Caco-2 (cell line): ENCODE measurements at regions of chr2 and their contacts with region 1.

Region 1: DNA sequence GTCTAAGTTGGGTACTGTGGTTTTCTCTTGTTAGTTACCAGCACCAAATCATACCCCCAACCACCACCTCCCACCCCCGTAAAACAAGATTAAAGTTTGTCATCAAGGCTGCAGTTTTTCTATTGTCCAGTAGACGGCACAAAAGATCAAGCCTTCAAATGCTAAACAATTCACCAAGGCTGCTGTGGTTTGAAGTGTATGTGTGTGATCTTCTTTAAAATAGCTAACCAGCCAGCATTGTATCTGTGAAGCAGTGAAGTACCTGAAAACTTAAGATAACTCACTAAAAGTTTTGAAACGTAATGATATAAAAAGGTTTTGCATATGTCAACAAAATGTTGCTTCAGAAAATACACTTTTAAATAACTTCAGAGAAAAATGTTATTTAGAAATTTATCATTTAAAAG is 5.9 kb upstream of the MEIS1 start:
- DNase-seq: peak in 1 of 2 experiments; percentile 56
- H3K4me3 ChIP-seq: no peak overlapping the region
- H3K4me3 Mint-ChIP-seq: no peak overlapping the region
- H3K27ac Mint-ChIP-seq: no peak overlapping the region
- H3K4me1 ChIP-seq: peaks cover 25% of the 10 kb centered on the region
- H3K4me1 Mint-ChIP-seq: peaks cover 16% of the 10 kb centered on the region
- H3K27me3 ChIP-seq: no peaks in the 10 kb centered on the region
- H3K27me3 Mint-ChIP-seq: no peaks in the 10 kb centered on the region
- CTCF ChIP-seq: peak; percentile 86 to 92

Region 2: DNA sequence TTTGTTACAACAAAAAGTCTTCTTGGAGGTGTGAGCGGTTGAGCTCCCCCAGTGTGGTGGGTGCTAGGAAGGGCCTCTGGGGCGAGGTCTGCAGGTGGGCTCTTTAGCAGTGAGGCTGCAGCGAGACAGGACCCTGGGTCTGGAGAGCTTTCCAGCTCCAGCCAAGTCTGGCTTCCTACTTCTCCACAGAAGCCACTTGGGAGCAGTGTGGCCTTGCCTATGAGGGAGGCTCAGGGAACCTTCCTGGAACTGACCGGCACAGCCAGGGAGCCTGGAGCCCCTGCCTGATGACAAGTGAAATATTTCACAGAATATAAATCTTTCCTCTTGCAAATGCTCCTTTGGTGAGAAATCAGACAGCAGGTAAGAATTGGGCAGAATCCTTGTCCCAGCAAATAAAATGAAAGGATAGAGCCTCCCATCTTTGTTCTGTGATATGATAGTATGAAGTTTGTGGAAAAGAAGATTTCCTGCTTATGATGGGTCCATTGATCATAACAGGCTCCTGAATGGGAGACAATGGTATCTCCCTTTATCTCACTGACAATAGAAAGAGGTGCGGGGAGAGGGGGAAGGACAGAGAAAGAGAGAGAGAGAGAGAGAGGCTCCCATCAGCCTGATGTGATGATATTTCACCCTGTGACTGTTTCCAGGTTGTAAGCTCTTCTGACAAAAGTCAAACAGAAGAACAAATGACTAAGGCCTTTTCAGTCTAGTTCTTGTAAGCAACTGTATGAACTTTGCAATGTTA is 706.9 kb before region 1 on chr2:
- CTCF ChIA-PET with region 1: no interaction called
- POLR2A ChIA-PET with region 1: no interaction called
- intact Hi-C with region 1: loop called (anchors 5 kb)
- DNase-seq: peak; percentile 22 to 50
- H3K4me3 ChIP-seq: no peak overlapping the region
- H3K4me3 Mint-ChIP-seq: no peak overlapping the region
- H3K27ac Mint-ChIP-seq: no peak overlapping the region
- H3K4me1 ChIP-seq: no peaks in the 10 kb centered on the region
- H3K4me1 Mint-ChIP-seq: no peaks in the 10 kb centered on the region
- H3K27me3 ChIP-seq: no peaks in the 10 kb centered on the region
- H3K27me3 Mint-ChIP-seq: peaks cover 17% of the 10 kb centered on the region
- CTCF ChIP-seq: no peak

Region 3: DNA sequence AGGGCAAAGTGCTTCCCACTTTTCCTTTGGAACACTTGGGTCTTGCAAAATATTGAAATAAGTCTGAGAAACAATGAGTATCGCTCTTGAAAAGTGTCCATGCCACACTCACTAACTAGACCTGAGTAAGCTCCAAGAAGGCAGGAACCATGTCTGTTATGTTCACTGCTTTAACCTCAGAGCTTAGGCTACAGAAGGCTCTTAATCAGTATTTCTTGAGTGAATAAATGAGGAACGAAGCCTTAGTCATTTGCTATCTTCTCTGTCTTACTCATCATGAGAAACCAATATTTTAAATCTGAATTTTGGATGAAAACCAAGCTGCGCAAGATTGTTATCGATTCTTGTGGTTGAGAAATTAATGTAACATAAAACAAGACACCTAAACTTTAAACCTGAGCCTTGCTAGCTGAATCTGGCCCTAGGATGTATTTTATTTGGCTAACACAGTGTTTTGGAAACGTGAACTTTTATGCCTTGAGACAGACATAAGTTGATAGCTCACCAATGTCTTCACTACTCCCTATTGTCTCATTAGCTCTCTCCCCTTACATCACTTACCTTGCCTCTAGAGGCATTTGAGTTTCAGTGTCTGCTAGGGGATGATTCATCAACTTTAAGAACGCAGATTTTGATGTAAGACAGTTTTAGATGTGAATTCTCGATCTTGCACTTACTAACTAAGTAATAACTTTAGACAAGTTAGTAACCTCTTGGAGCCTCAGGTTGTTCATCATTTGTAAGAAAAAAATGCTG is 387.0 kb before region 1 on chr2:
- CTCF ChIA-PET with region 1: no interaction called
- POLR2A ChIA-PET with region 1: no interaction called
- intact Hi-C with region 1: loop called (anchors 10 kb)
- DNase-seq: no peak
- H3K4me3 ChIP-seq: no peak overlapping the region
- H3K4me3 Mint-ChIP-seq: no peak overlapping the region
- H3K27ac Mint-ChIP-seq: no peak overlapping the region
- H3K4me1 ChIP-seq: no peaks in the 10 kb centered on the region
- H3K4me1 Mint-ChIP-seq: no peaks in the 10 kb centered on the region
- H3K27me3 ChIP-seq: no peaks in the 10 kb centered on the region
- H3K27me3 Mint-ChIP-seq: peaks cover 3% of the 10 kb centered on the region
- CTCF ChIP-seq: no peak

Region 4: DNA sequence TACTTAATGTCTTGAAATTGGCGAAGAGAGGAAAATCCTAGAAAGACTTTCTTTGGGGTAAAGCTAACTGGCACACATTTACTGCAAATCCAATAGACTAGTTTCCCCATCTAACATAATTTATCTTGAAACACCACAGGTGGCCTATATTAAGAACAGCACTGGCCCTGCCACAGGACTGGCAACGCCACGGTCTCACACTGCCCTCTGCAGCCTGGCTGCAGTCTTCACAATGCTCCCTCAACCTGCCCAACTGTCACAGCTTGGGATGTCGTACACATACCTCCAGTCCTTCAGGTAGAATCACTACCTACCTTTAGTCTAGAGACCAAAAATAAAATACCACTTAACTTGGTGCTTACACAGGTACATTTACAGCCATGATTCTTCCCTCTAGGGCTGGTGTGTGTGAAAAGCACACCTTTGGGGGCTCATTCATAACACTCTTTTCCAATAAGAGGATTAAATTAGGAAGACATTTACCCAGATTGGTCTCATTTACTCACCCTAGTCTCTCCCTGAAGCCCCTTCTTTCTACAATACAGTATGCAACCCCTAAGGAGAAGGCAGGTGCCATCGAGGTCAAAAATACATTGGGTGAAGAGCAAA is 1411.5 kb after region 1 on chr2:
- CTCF ChIA-PET with region 1: no interaction called
- POLR2A ChIA-PET with region 1: no interaction called
- intact Hi-C with region 1: loop called (anchors 5 kb)
- DNase-seq: peak; percentile 60 to 68
- H3K4me3 ChIP-seq: no peak overlapping the region
- H3K4me3 Mint-ChIP-seq: no peak overlapping the region
- H3K27ac Mint-ChIP-seq: no peak overlapping the region
- H3K4me1 ChIP-seq: no peaks in the 10 kb centered on the region
- H3K4me1 Mint-ChIP-seq: no peaks in the 10 kb centered on the region
- H3K27me3 ChIP-seq: no peaks in the 10 kb centered on the region
- H3K27me3 Mint-ChIP-seq: peaks cover 3% of the 10 kb centered on the region
- CTCF ChIP-seq: peak; percentile 63 to 74